Mammary epithelial cell (primary cell): ENCODE measurements at regions of chr5 and their contacts with region 1.

Region 1: GRCh38 chr5:67591491-67591890 is 394.9 kb upstream of the CD180 start:
- DNase-seq: no peak
- H3K4me3 ChIP-seq: no peak overlapping the region
- H3K27ac ChIP-seq: no peak overlapping the region
- H3K4me1 ChIP-seq: no peaks in the 10 kb centered on the region
- H3K27me3 ChIP-seq: no peaks in the 10 kb centered on the region
- CTCF ChIP-seq: no peak

Region 2: DNA sequence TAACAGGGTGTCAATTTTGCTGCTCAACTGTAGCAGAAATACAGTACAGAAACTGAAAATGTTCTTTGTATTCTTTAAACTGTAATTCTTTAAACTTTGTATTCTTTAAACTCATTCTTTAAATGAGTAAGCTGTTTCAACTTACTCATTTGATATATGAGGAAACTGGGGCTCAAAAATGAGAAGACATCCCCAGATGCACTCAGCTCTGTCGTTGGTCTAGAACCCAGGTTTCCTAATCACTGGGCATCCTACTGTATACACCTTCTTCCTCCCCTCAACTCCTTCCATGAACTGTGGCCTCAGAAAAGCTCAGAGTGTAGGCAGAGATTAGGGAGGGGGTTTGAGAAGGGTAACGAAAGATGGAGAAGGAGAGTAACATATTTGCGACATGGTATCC is 1131.8 kb before region 1 on chr5:
- CTCF ChIA-PET with region 1: interaction called, 10 read pairs
- dilution Hi-C with region 1: no loop called
- in situ Hi-C with region 1: no loop called
- intact Hi-C with region 1: no loop called
- DNase-seq: no peak
- H3K4me3 ChIP-seq: no peak overlapping the region
- H3K27ac ChIP-seq: no peak overlapping the region
- H3K4me1 ChIP-seq: no peaks in the 10 kb centered on the region
- H3K27me3 ChIP-seq: peaks cover 2% of the 10 kb centered on the region
- CTCF ChIP-seq: no peak

Region 3: GRCh38 chr5:67268231-67269021 is 323.1 kb before region 1 on chr5:
- CTCF ChIA-PET with region 1: no interaction called
- dilution Hi-C with region 1: no loop called
- in situ Hi-C with region 1: no loop called
- intact Hi-C with region 1: no loop called
- DNase-seq: peak; percentile 85
- H3K4me3 ChIP-seq: no peak overlapping the region
- H3K27ac ChIP-seq: peak overlapping the region; percentile 79
- H3K4me1 ChIP-seq: peaks cover 43% of the 10 kb centered on the region
- H3K27me3 ChIP-seq: no peaks in the 10 kb centered on the region
- CTCF ChIP-seq: no peak

Region 4: DNA sequence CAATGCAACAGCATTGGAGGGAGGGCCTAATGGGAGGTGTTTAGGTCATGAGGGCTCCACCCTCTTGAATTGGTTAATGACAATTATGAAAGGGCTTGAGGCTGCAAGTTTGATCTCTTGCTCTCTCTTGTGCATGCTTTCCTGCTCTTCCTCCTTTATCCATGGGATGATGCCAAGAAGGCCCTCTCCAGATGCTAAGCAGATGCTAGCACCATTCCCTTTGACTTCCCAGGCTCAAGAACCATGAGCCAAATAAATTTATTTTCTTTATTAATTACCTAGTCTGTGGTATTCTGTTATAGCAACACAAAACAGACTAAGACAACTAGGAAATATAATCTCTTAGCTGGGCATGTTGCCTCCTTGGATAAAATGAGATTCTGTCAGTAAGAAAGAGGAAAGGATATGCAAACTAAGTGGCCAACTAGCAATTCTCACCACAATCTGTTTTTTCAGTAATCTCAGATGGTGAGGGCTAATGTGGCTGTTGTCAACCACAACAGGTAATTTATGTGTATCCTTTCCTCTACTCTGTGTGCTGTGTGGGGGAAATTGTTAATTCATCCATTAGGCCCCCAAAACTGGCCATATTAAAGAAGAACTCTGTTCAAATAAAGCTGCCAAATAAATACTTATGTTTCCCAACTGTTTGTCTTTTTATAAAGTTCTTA is 125.8 kb before region 1 on chr5:
- CTCF ChIA-PET with region 1: no interaction called
- dilution Hi-C with region 1: no loop called
- in situ Hi-C with region 1: no loop called
- intact Hi-C with region 1: no loop called
- DNase-seq: no peak
- H3K4me3 ChIP-seq: no peak overlapping the region
- H3K27ac ChIP-seq: no peak overlapping the region
- H3K4me1 ChIP-seq: no peaks in the 10 kb centered on the region
- H3K27me3 ChIP-seq: no peaks in the 10 kb centered on the region
- CTCF ChIP-seq: no peak